ENCODE measurements at regions of chr11 and their contacts with region 1.

Region 1: GRCh38 chr11:61111786-61112517 is 9.7 kb downstream of the CD5 start:
- DNase-seq: peak; percentile 86
- ATAC-seq: peak; percentile 92
- H3K4me3 Mint-ChIP-seq: peak overlapping the region; percentile 77
- H3K27ac Mint-ChIP-seq: peak overlapping the region; percentile 99
- H3K4me1 Mint-ChIP-seq: peaks cover 99% of the 10 kb centered on the region
- H3K27me3 Mint-ChIP-seq: no peaks in the 10 kb centered on the region

Region 2: GRCh38 chr11:61021661-61022212 is 90.2 kb before region 1 on chr11:
- CTCF ChIA-PET with region 1: interaction called, 3 read pairs
- POLR2A ChIA-PET with region 1: interaction called, 13 read pairs
- DNase-seq: peak; percentile 86
- ATAC-seq: peak; percentile 52
- H3K4me3 Mint-ChIP-seq: peak overlapping the region; percentile 19
- H3K27ac Mint-ChIP-seq: peak overlapping the region; percentile 85
- H3K4me1 Mint-ChIP-seq: peaks cover 69% of the 10 kb centered on the region
- H3K27me3 Mint-ChIP-seq: no peaks in the 10 kb centered on the region

Region 3: GRCh38 chr11:61062181-61062930 is 49.6 kb before region 1 on chr11:
- CTCF ChIA-PET with region 1: no interaction called
- POLR2A ChIA-PET with region 1: no interaction called
- DNase-seq: no peak
- ATAC-seq: no peak
- H3K4me3 Mint-ChIP-seq: no peak overlapping the region
- H3K27ac Mint-ChIP-seq: peak overlapping the region; percentile 93
- H3K4me1 Mint-ChIP-seq: peaks cover 76% of the 10 kb centered on the region
- H3K27me3 Mint-ChIP-seq: no peaks in the 10 kb centered on the region

Region 4: GRCh38 chr11:61083601-61084147 is 28.3 kb before region 1 on chr11:
- CTCF ChIA-PET with region 1: interaction called, 36 read pairs
- POLR2A ChIA-PET with region 1: interaction called, 7 read pairs
- DNase-seq: peak; percentile 78
- ATAC-seq: peak; percentile 60
- H3K4me3 Mint-ChIP-seq: peak overlapping the region; percentile 71
- H3K27ac Mint-ChIP-seq: peak overlapping the region; percentile 96
- H3K4me1 Mint-ChIP-seq: peaks cover 53% of the 10 kb centered on the region
- H3K27me3 Mint-ChIP-seq: no peaks in the 10 kb centered on the region

Region 5: GRCh38 chr11:61091373-61092279 is 20.3 kb before region 1 on chr11:
- CTCF ChIA-PET with region 1: interaction called, 14 read pairs
- POLR2A ChIA-PET with region 1: interaction called, 10 read pairs
- DNase-seq: no peak
- ATAC-seq: peak; percentile 12
- H3K4me3 Mint-ChIP-seq: peak overlapping the region; percentile 65
- H3K27ac Mint-ChIP-seq: peak overlapping the region; percentile 90
- H3K4me1 Mint-ChIP-seq: peaks cover 55% of the 10 kb centered on the region
- H3K27me3 Mint-ChIP-seq: no peaks in the 10 kb centered on the region

Region 6: DNA sequence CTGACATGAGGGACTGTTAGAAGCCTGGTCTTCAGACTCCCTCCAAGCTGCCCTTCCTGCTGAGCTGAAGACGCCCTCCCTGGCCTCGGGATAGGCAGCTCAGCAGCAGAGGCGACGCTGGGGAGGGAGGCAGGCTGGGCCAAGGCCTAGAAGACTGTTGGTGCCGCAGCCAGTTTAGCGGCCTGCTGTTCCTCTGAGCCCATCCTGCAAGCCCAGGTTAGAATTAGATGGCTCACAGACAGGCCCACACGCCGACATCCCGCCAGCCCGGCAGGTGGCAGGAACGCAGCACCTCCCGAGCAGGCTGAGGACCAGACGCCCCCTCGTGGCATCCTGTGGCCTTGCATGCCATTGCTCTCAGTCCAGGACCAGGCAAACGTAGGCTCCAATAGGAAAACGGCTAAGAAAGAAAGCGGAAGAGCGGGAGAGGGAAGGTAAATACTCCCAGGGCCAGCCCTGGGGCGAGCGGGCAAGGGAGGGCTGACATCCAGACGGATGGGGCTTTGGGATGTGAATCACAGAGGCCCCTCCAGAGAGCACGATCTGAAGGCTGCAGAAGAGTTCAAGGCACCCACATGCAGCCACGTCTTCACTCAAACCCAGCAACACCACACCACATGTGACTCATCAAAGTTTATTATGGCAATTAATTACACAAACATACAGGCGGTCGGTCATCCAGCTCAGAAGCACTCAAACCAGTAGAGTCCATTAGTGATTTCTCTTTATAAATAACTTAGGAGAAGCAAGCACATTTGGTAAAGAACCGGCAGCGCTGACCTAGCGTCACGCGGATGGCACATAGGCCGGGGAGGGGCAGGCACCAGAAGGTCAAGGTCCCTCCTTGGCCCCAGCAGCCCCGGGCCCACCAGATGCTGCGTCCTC is 17.9 kb after region 1 on chr11:
- CTCF ChIA-PET with region 1: interaction called, 52 read pairs
- POLR2A ChIA-PET with region 1: interaction called, 3 read pairs
- DNase-seq: peak; percentile 94
- ATAC-seq: peak; percentile 94
- H3K4me3 Mint-ChIP-seq: peak overlapping the region; percentile 32
- H3K27ac Mint-ChIP-seq: peak overlapping the region; percentile 47
- H3K4me1 Mint-ChIP-seq: peaks cover 23% of the 10 kb centered on the region
- H3K27me3 Mint-ChIP-seq: no peaks in the 10 kb centered on the region